Thyroid gland (tissue), 4 donors: ENCODE measurements at regions of chr3 and their contacts with region 1.

Region 1: GRCh38 chr3:177359593-177360357 is 162.5 kb upstream of the TBL1XR1 start:
- DNase-seq: peak; percentile 93 to 95
- H3K4me3 ChIP-seq: peak overlapping the region in 1 of 3 donors; percentile 2
- H3K27ac ChIP-seq: peak overlapping the region; percentile 74 to 93 (median 88)
- H3K4me1 ChIP-seq: peaks cover 54 to 62% of the 10 kb centered on the region in 2 donors
- H3K27me3 ChIP-seq: no peaks in the 10 kb centered on the region
- CTCF ChIP-seq: peak in 2 of 6 experiments; percentile 21 to 25
- POLR2A ChIP-seq: peak in 1 of 2 donors; percentile 38

Region 2: DNA sequence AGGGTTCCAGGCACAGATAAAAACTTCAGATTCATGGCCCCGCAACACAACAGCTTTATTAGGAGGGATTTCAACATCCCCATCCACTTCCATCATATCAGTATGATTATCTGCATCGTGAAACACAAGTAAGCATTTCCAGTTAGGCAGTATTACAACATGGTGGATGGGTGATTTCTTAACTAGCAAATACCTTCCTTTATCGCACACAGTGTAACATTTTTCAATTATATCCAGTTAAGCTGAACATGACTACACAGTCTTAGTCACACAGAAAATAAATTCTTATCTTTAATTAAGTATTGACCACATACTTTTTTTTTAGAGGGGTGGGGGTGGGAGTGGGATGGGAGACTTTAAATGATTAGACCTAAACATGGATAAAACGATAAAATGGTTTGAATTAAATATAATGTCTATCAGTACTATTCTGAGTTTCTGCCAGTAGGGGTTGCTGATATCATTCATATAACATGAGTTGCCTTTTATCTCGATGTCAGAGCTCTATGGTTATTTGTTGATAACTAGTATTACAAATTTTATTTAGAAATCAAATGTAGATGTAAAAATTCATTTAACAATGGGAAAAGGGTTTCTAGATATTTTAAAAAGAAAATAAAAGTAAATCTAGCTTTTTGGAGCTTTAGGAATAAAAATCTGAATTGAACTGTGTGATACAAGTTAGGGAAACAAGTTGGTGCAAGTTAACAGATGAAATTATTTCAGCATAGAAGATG is 309.1 kb before region 1 on chr3:
- intact Hi-C with region 1: loop called (anchors 10 kb)
- DNase-seq: no peak
- H3K4me3 ChIP-seq: no peak overlapping the region
- H3K27ac ChIP-seq: peak overlapping the region in 2 of 3 donors; percentile 13 to 28
- H3K4me1 ChIP-seq: peaks cover 6 to 9% of the 10 kb centered on the region in 2 donors
- H3K27me3 ChIP-seq: no peaks in the 10 kb centered on the region
- CTCF ChIP-seq: peak; percentile 24 to 83 (median 52)
- POLR2A ChIP-seq: no peak

Region 3: DNA sequence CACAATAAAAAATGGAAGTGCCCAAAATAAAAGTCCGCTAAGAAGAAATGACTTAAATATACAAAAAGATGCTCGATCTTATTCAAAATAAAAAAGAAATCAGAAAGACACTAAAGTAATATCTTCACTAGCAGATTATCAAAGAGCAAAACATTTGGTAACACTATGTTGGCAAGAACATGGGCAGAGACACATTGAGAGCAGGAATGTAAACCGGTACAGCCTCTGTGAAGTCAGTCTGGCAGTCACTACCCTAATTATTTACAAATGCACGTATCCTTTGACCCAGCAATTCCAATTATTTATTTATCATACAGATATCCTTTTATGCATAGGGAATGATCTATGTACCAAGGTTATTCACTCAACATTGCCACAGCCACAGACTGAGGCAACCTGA is 197.0 kb before region 1 on chr3:
- intact Hi-C with region 1: no loop called
- DNase-seq: no peak
- H3K4me3 ChIP-seq: no peak overlapping the region
- H3K27ac ChIP-seq: no peak overlapping the region
- H3K4me1 ChIP-seq: peaks cover 0 to under 1% of the 10 kb centered on the region in 2 donors
- H3K27me3 ChIP-seq: no peaks in the 10 kb centered on the region
- CTCF ChIP-seq: no peak
- POLR2A ChIP-seq: no peak

Region 4: GRCh38 chr3:177197041-177197727 is 162.6 kb before region 1 on chr3 and contains the start of gene TBL1XR1:
- intact Hi-C with region 1: loop called (anchors 5 kb)
- DNase-seq: peak; percentile 93 to 94
- H3K4me3 ChIP-seq: peak within 1 kb of the TSS; percentile 69 to 96 (median 70)
- H3K27ac ChIP-seq: peak within 1 kb of the TSS; percentile 98 to 99 (median 98)
- H3K4me1 ChIP-seq: peaks cover 26 to 28% of the 10 kb centered on the region in 2 donors
- H3K27me3 ChIP-seq: no peaks in the 10 kb centered on the region
- CTCF ChIP-seq: no peak
- POLR2A ChIP-seq: peak in 1 of 2 donors; percentile 21
- total RNA-seq, gene TBL1XR1: 164 to 239 (median 195) TPM

Region 5: GRCh38 chr3:177300039-177300833 is 59.5 kb before region 1 on chr3:
- intact Hi-C with region 1: loop called (anchors 10 kb)
- DNase-seq: peak; percentile 96 to 97
- H3K4me3 ChIP-seq: no peak overlapping the region
- H3K27ac ChIP-seq: peak overlapping the region; percentile 86 to 96 (median 89)
- H3K4me1 ChIP-seq: peaks cover 17 to 25% of the 10 kb centered on the region in 2 donors
- H3K27me3 ChIP-seq: no peaks in the 10 kb centered on the region
- CTCF ChIP-seq: no peak
- POLR2A ChIP-seq: peak in 1 of 2 donors; percentile 57

Region 6: GRCh38 chr3:177516158-177517011 is 156.6 kb after region 1 on chr3:
- intact Hi-C with region 1: loop called (anchors 10 kb)
- DNase-seq: peak; percentile 94 to 96
- H3K4me3 ChIP-seq: no peak overlapping the region
- H3K27ac ChIP-seq: peak overlapping the region; percentile 85 to 92 (median 86)
- H3K4me1 ChIP-seq: peaks cover 34 to 45% of the 10 kb centered on the region in 2 donors
- H3K27me3 ChIP-seq: no peaks in the 10 kb centered on the region
- CTCF ChIP-seq: no peak
- POLR2A ChIP-seq: peak in 1 of 2 donors; percentile 42